KBM-7 (cell line): ENCODE measurements at regions of chr11 and their contacts with region 1.

Region 1: GRCh38 chr11:133927690-133928627 is 28.8 kb downstream of the IGSF9B start:
- DNase-seq: peak; percentile 82

Region 2: DNA sequence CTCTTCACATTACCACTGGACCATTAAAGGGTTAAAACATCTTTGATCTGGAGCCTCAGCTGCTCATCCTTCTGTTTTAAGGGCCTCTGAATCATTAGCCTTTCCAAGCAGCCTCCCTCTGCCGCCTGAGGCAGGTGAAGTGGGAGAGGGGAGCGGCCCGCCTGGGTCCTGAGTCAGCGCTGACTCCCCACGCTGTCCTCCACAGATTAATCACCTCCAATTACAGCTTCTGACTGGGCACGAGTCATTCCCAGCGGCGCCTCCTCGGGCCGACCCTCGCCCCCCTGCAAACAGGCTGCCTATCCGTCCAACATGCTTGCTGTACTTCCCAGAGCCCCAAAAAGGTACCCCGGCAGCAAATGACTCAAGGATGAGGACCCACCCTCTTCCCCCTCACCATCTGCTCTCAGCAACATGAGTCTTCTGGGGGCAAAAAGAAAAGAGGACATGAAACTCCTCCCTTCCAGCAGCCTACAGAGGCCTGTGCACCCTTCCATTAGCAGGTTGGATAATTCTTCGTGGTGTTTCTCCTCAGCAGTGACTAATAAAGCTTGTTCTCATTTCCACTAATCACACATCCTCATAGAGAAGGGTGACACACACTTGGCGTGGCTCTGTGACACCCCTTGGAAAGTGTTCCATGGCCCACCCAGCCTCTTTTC is 96.6 kb after region 1 on chr11:
- in situ Hi-C with region 1: no loop called
- DNase-seq: no peak

Region 3: GRCh38 chr11:134098566-134099184 is 170.7 kb after region 1 on chr11:
- in situ Hi-C with region 1: no loop called
- DNase-seq: peak; percentile 42

Region 4: GRCh38 chr11:134139873-134140331 is 211.9 kb after region 1 on chr11:
- in situ Hi-C with region 1: loop called (anchors 25 kb)
- DNase-seq: peak; percentile 86